Kidney (tissue), 22 donors: ENCODE measurements at regions of chr5 and their contacts with region 1.

Region 1: DNA sequence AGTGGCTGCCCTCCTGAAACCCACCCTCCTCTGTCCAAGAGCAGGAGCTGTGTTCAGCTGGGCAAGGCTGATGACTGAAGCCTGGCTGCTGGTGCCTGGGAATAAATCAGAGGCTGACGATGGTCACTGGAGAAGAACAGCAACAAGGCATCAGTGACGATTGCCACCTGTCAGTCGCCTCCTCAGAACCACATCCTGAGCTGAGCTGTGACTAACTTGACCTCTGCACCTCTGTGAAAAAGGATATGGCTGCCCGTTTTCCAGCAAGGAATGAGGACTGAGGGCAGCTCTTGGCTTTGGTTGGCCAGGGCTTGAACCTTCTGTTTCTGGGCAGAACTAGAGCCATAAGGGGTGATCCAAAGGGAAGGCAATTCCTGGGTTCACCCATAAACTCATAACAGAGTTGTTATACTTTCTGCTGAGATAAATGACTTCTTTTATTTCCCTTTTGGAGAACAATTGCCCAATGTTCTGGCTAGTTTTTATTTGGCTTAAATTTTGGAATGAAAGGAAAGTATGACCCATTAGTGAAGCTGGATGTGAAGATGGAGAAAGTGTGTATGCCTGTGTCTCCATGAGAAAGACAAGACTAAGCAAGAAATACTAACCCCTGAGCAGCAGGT is 40.1 kb downstream of the TRIP13 start:
- DNase-seq: peak in 3 of 5 donors; percentile 32 to 44 (median 39)
- H3K4me3 ChIP-seq: no peak overlapping the region
- H3K27ac ChIP-seq: no peak overlapping the region
- H3K4me1 ChIP-seq: no peaks in the 10 kb centered on the region
- H3K27me3 ChIP-seq: no peaks in the 10 kb centered on the region
- CTCF ChIP-seq: no peak

Region 2: DNA sequence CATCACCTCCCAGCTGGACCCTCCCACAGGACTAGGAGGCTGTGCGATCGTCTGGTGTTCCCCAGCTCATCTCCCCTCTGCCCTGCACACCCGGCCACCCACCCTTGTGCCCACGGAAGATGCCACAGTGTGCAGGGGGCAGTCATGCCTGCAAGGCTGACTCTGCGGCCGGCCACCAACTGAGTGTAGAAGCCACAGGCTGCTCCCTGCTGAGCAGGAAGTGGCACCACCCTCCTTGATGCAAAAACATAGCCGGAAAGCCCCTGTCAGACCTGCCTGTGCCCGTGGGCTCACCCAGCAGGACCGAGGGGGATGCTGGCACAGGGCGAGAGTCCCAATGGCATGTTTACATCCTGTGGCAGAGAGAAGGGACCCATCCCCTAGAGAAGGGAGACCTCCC is 219.4 kb after region 1 on chr5:
- intact Hi-C with region 1: loop called (anchors 10 kb)
- DNase-seq: no peak
- H3K4me3 ChIP-seq: no peak overlapping the region
- H3K27ac ChIP-seq: no peak overlapping the region
- H3K4me1 ChIP-seq: no peaks in the 10 kb centered on the region
- H3K27me3 ChIP-seq: peaks cover 3% of the 10 kb centered on the region
- CTCF ChIP-seq: no peak